Activated B cell treated with CpG ODN at 0.5 μM for 24 hours (primary cell): ENCODE measurements at regions of chr17 and their contacts with region 1.

Region 1: GRCh38 chr17:43316522-43317142 is 82.2 kb upstream of the ARL4D start:
- DNase-seq: peak; percentile 31
- ATAC-seq: no peak
- H3K4me3 Mint-ChIP-seq: no peak overlapping the region
- H3K27ac Mint-ChIP-seq: no peak overlapping the region
- H3K4me1 Mint-ChIP-seq: peaks cover 17% of the 10 kb centered on the region
- H3K27me3 Mint-ChIP-seq: no peaks in the 10 kb centered on the region
- CTCF ChIP-seq: no peak

Region 2: GRCh38 chr17:43006639-43007551 is 309.7 kb before region 1 on chr17 and contains the start of gene IFI35:
- CTCF ChIA-PET with region 1: no interaction called
- POLR2A ChIA-PET with region 1: interaction called, 34 read pairs
- intact Hi-C with region 1: no loop called
- DNase-seq: peak; percentile 75
- ATAC-seq: peak; percentile 99
- H3K4me3 Mint-ChIP-seq: peak within 1 kb of the TSS; percentile 99
- H3K27ac Mint-ChIP-seq: peak within 1 kb of the TSS; percentile 99
- H3K4me1 Mint-ChIP-seq: peaks cover 16% of the 10 kb centered on the region
- H3K27me3 Mint-ChIP-seq: no peaks in the 10 kb centered on the region
- CTCF ChIP-seq: no peak
- total RNA-seq, gene IFI35: 41.9 and 50.5 TPM in 2 replicates

Region 3: GRCh38 chr17:43151880-43152456 is 164.7 kb before region 1 on chr17:
- CTCF ChIA-PET with region 1: no interaction called
- POLR2A ChIA-PET with region 1: interaction called, 13 read pairs
- intact Hi-C with region 1: no loop called
- DNase-seq: no peak
- ATAC-seq: no peak
- H3K4me3 Mint-ChIP-seq: no peak overlapping the region
- H3K27ac Mint-ChIP-seq: no peak overlapping the region
- H3K4me1 Mint-ChIP-seq: no peaks in the 10 kb centered on the region
- H3K27me3 Mint-ChIP-seq: no peaks in the 10 kb centered on the region
- CTCF ChIP-seq: no peak

Region 4: DNA sequence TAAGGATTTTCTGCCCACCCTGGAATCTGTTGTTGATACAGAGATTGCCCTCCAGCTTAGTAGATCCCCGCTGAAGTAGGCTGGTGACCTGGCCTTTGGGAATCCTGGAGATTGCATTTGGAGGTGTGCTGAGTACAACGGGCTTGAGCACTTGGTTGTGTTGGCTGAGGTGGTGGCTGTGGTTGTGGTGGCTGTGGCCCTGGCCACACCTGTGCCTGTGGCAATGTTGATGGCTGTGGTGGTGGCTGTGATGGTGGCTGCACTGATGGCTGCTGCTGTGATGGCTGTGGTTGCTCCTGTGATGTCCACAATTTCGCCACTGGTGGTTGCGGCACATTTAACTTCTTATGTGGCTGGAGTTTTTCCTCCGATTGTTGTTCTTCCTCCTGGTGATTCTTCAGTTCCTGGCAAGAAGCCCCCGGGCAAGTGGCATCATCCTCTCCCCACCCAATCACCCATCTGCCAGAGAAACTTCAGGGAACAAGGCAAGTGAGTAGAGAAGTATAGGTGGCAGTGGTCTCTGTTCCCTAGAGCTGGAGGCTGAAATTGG is 92.4 kb before region 1 on chr17:
- CTCF ChIA-PET with region 1: no interaction called
- POLR2A ChIA-PET with region 1: interaction called, 359 read pairs
- intact Hi-C with region 1: no loop called
- DNase-seq: no peak
- ATAC-seq: no peak
- H3K4me3 Mint-ChIP-seq: no peak overlapping the region
- H3K27ac Mint-ChIP-seq: peak overlapping the region; percentile 37
- H3K4me1 Mint-ChIP-seq: peaks cover 7% of the 10 kb centered on the region
- H3K27me3 Mint-ChIP-seq: no peaks in the 10 kb centered on the region
- CTCF ChIP-seq: no peak

Region 5: DNA sequence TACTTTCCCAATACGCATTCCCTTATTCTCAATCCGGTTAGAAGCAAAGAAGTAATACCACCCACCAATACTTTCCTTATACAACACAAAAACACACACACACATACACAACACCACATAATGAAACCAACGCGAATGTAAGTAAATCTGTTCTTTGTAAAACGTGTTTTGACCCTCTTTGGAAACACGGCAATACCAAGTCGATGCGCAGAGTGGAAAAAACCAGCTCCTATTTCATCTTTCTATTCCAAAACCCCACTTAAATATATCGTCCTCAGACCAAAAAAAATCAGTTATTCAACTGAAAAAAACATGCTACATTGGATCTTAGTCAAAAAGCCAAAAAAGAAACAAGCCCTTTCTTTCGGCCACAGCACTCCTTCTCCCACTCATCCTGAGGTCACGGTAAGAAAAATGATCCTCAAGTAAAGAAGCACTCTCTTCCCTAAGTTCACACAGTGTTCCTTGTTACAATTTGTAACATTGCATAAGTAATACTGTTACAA is 51.2 kb after region 1 on chr17:
- CTCF ChIA-PET with region 1: no interaction called
- POLR2A ChIA-PET with region 1: interaction called, 132 read pairs
- intact Hi-C with region 1: no loop called
- DNase-seq: no peak
- ATAC-seq: peak; percentile 45
- H3K4me3 Mint-ChIP-seq: peak overlapping the region; percentile 95
- H3K27ac Mint-ChIP-seq: peak overlapping the region; percentile 100
- H3K4me1 Mint-ChIP-seq: peaks cover 51% of the 10 kb centered on the region
- H3K27me3 Mint-ChIP-seq: no peaks in the 10 kb centered on the region
- CTCF ChIP-seq: no peak

Region 6: DNA sequence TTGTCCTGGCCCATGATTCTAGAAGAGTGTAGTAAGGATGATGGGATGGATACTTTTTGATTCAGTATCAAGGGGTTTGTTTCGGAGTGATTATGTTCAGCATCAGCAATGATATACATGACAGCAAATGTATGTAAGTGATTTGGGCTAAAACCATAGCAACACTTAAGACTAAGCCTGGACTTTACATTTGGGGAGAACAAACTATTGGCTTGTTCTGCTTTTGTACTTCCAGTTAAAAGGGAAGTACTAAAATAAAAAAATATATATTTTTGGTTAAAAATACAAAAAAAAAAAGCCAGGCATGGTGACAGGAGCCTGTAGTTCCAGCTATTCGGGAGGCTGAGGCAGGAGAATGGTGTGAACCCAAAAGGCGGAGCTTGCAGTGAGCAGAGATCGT is 146.6 kb after region 1 on chr17:
- CTCF ChIA-PET with region 1: no interaction called
- POLR2A ChIA-PET with region 1: no interaction called
- intact Hi-C with region 1: no loop called
- DNase-seq: no peak
- ATAC-seq: no peak
- H3K4me3 Mint-ChIP-seq: no peak overlapping the region
- H3K27ac Mint-ChIP-seq: no peak overlapping the region
- H3K4me1 Mint-ChIP-seq: no peaks in the 10 kb centered on the region
- H3K27me3 Mint-ChIP-seq: peaks cover 26% of the 10 kb centered on the region
- CTCF ChIP-seq: no peak

Region 7: DNA sequence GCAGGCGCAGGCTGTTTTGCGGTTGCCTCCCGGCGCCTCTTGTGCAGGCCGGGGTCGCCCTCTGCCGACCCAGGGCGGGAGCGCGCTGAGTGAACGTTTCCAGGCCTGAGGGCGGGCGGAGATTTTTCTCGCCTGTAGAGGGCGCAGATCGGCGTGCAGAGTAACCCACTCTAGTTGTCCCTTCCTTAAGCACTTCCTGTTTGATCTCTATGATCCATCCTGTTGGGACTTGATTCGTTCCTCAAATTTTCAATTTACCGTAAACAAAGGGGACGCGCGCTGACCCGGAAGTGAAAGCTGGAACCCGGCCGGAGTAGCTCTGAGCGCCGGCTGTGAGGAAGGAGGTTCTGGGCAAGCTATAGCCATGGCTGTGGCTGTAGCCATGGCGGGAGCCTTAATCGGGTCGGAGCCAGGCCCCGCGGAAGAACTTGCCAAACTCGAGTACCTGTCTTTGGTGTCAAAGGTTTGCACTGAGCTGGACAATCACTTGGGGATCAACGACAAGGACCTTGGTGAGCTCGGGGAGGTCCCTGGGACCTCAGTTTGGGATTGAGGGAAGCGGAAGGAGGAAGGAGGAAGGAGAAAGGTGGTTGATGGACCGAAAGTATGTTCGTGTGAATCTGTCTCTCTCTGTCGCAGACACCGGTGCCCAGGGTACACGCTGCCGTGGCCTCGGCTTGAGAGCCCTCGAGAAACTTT is 167.2 kb after region 1 on chr17 and contains the start of gene DHX8:
- CTCF ChIA-PET with region 1: interaction called, 3 read pairs
- POLR2A ChIA-PET with region 1: interaction called, 36 read pairs
- intact Hi-C with region 1: loop called (anchors 1 kb)
- DNase-seq: peak; percentile 99
- ATAC-seq: peak; percentile 97
- H3K4me3 Mint-ChIP-seq: peak within 1 kb of the TSS; percentile 94
- H3K27ac Mint-ChIP-seq: peak within 1 kb of the TSS; percentile 89
- H3K4me1 Mint-ChIP-seq: peaks cover 36% of the 10 kb centered on the region
- H3K27me3 Mint-ChIP-seq: no peaks in the 10 kb centered on the region
- CTCF ChIP-seq: peak; percentile 98
- total RNA-seq, gene DHX8: 60.6 and 63.4 TPM in 2 replicates